Vagina (tissue), 2 donors: ENCODE measurements at regions of chr17 and their contacts with region 1.

Region 1: GRCh38 chr17:82648166-82648668 is at the start of gene WDR45B:
- DNase-seq: peak in 1 of 2 donors; percentile 97
- H3K4me3 ChIP-seq: peak within 1 kb of the TSS; percentile 70 to 98
- H3K27ac ChIP-seq: peak within 1 kb of the TSS; percentile 88
- H3K4me1 ChIP-seq: peaks cover 41% of the 10 kb centered on the region
- H3K27me3 ChIP-seq: no peaks in the 10 kb centered on the region
- CTCF ChIP-seq: no peak
- POLR2A ChIP-seq: peak in 1 of 2 donors; percentile 90
- total RNA-seq, gene WDR45B: 86.4 TPM

Region 2: GRCh38 chr17:82740906-82741759 is 92.9 kb after region 1 on chr17:
- intact Hi-C with region 1: loop called (anchors 5 kb)
- DNase-seq: no peak
- H3K4me3 ChIP-seq: no peak overlapping the region
- H3K27ac ChIP-seq: no peak overlapping the region
- H3K4me1 ChIP-seq: peaks cover 15% of the 10 kb centered on the region
- H3K27me3 ChIP-seq: no peaks in the 10 kb centered on the region
- CTCF ChIP-seq: no peak
- POLR2A ChIP-seq: no peak

Region 3: GRCh38 chr17:82828848-82829467 is 180.7 kb after region 1 on chr17:
- intact Hi-C with region 1: loop called (anchors 5 kb)
- DNase-seq: no peak
- H3K4me3 ChIP-seq: no peak overlapping the region
- H3K27ac ChIP-seq: no peak overlapping the region
- H3K4me1 ChIP-seq: peaks cover 6% of the 10 kb centered on the region
- H3K27me3 ChIP-seq: no peaks in the 10 kb centered on the region
- CTCF ChIP-seq: no peak
- POLR2A ChIP-seq: no peak